Naive thymus-derived CD4-positive, alpha-beta T cell (primary cell): ENCODE measurements at regions of chr17 and their contacts with region 1.

Region 1: GRCh38 chr17:78013683-78014467 is 55.4 kb downstream of the TNRC6C start:
- DNase-seq: peak in 7 of 9 donors; percentile 39 to 68 (median 61)
- ATAC-seq: peak; percentile 77
- H3K4me3 ChIP-seq: no peak overlapping the region
- H3K4me3 Mint-ChIP-seq: no peak overlapping the region
- H3K27ac ChIP-seq: no peak overlapping the region
- H3K27ac Mint-ChIP-seq: peak overlapping the region in 5 of 9 donors; percentile 3 to 64 (median 18)
- H3K4me1 ChIP-seq: peaks cover 0 to 3% of the 10 kb centered on the region in 2 donors
- H3K4me1 Mint-ChIP-seq: peaks cover 18 to 58% (median 43%) of the 10 kb centered on the region in 7 donors
- H3K27me3 ChIP-seq: no peaks in the 10 kb centered on the region
- H3K27me3 Mint-ChIP-seq: no peaks in the 10 kb centered on the region

Region 2: GRCh38 chr17:77542551-77543490 is 471.1 kb before region 1 on chr17:
- CTCF ChIA-PET with region 1: interaction called, 28 read pairs
- POLR2A ChIA-PET with region 1: interaction called, 6 read pairs
- intact Hi-C with region 1: loop called in 1 of 2 experiments (anchors 1 kb)
- DNase-seq: peak; percentile 32 to 72 (median 62)
- ATAC-seq: peak; percentile 87
- H3K4me3 ChIP-seq: no peak overlapping the region
- H3K4me3 Mint-ChIP-seq: no peak overlapping the region
- H3K27ac ChIP-seq: no peak overlapping the region
- H3K27ac Mint-ChIP-seq: no peak overlapping the region
- H3K4me1 ChIP-seq: peaks cover 0 to 5% of the 10 kb centered on the region in 2 donors
- H3K4me1 Mint-ChIP-seq: peaks cover 0 to 7% (median 0%) of the 10 kb centered on the region in 7 donors
- H3K27me3 ChIP-seq: no peaks in the 10 kb centered on the region
- H3K27me3 Mint-ChIP-seq: peaks cover 0 to 37% (median 5%) of the 10 kb centered on the region in 5 donors

Region 3: GRCh38 chr17:77772461-77772897 is 241.4 kb before region 1 on chr17:
- CTCF ChIA-PET with region 1: interaction called, 61 read pairs
- POLR2A ChIA-PET with region 1: no interaction called
- intact Hi-C with region 1: loop called (anchors 1 kb)
- DNase-seq: peak; percentile 41 to 69 (median 57)
- ATAC-seq: peak; percentile 93
- H3K4me3 ChIP-seq: no peak overlapping the region
- H3K4me3 Mint-ChIP-seq: peak overlapping the region in 1 of 10 donors; percentile 8
- H3K27ac ChIP-seq: no peak overlapping the region
- H3K27ac Mint-ChIP-seq: peak overlapping the region in 5 of 9 donors; percentile 12 to 78 (median 74)
- H3K4me1 ChIP-seq: peaks cover 7 to 9% of the 10 kb centered on the region in 2 donors
- H3K4me1 Mint-ChIP-seq: peaks cover 12 to 15% (median 13%) of the 10 kb centered on the region in 7 donors
- H3K27me3 ChIP-seq: no peaks in the 10 kb centered on the region
- H3K27me3 Mint-ChIP-seq: peaks cover 0 to 17% (median 0%) of the 10 kb centered on the region in 5 donors

Region 4: GRCh38 chr17:77914385-77915254 is 99.3 kb before region 1 on chr17:
- CTCF ChIA-PET with region 1: interaction called, 5 read pairs
- POLR2A ChIA-PET with region 1: no interaction called
- intact Hi-C with region 1: loop called in 1 of 2 experiments (anchors 1 kb)
- DNase-seq: no peak
- ATAC-seq: no peak
- H3K4me3 ChIP-seq: no peak overlapping the region
- H3K4me3 Mint-ChIP-seq: peak overlapping the region in 1 of 10 donors; percentile 20
- H3K27ac ChIP-seq: no peak overlapping the region
- H3K27ac Mint-ChIP-seq: peak overlapping the region in 2 of 9 donors; percentile 18 to 51
- H3K4me1 ChIP-seq: peaks cover 0 to 4% of the 10 kb centered on the region in 2 donors
- H3K4me1 Mint-ChIP-seq: peaks cover 10 to 26% (median 14%) of the 10 kb centered on the region in 7 donors
- H3K27me3 ChIP-seq: no peaks in the 10 kb centered on the region
- H3K27me3 Mint-ChIP-seq: peaks cover 25 to 78% (median 45%) of the 10 kb centered on the region in 5 donors

Region 5: GRCh38 chr17:77935121-77935571 is 78.7 kb before region 1 on chr17:
- CTCF ChIA-PET with region 1: no interaction called
- POLR2A ChIA-PET with region 1: no interaction called
- intact Hi-C with region 1: no loop called
- DNase-seq: peak in 5 of 9 donors; percentile 31 to 50 (median 42)
- ATAC-seq: no peak
- H3K4me3 ChIP-seq: no peak overlapping the region
- H3K4me3 Mint-ChIP-seq: peak overlapping the region in 9 of 10 donors; percentile 19 to 64 (median 50)
- H3K27ac ChIP-seq: no peak overlapping the region
- H3K27ac Mint-ChIP-seq: peak overlapping the region in 6 of 9 donors; percentile 2 to 27 (median 12)
- H3K4me1 ChIP-seq: peaks cover 0 to 10% of the 10 kb centered on the region in 2 donors
- H3K4me1 Mint-ChIP-seq: peaks cover 6 to 35% (median 26%) of the 10 kb centered on the region in 7 donors
- H3K27me3 ChIP-seq: no peaks in the 10 kb centered on the region
- H3K27me3 Mint-ChIP-seq: peaks cover 0 to 41% (median 0%) of the 10 kb centered on the region in 5 donors

Region 6: DNA sequence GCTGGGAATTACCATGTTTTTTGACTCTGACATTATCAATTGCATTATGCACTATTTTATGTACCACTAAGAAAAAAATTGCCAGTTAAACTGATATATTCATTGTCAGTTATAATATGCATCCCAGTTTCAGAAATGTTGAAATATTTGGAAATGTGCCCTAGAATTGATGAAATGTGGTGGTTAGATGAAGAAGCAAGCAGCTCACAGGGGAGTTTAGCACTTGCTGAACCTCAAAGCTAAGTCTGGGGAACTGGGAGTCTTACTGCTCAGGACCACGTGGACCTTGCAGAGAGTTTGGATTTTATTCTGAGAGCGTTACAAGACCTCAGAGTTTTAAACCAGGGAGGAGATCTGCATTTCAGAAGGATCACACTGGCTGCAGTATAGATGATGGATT is 12.5 kb after region 1 on chr17:
- CTCF ChIA-PET with region 1: interaction called, 11 read pairs
- POLR2A ChIA-PET with region 1: interaction called, 3 read pairs
- intact Hi-C with region 1: no loop called
- DNase-seq: no peak
- ATAC-seq: no peak
- H3K4me3 ChIP-seq: no peak overlapping the region
- H3K4me3 Mint-ChIP-seq: no peak overlapping the region
- H3K27ac ChIP-seq: no peak overlapping the region
- H3K27ac Mint-ChIP-seq: peak overlapping the region in 4 of 9 donors; percentile 4 to 55 (median 27)
- H3K4me1 ChIP-seq: peaks cover 0 to 6% of the 10 kb centered on the region in 2 donors
- H3K4me1 Mint-ChIP-seq: peaks cover 10 to 49% (median 34%) of the 10 kb centered on the region in 7 donors
- H3K27me3 ChIP-seq: no peaks in the 10 kb centered on the region
- H3K27me3 Mint-ChIP-seq: no peaks in the 10 kb centered on the region

Region 7: DNA sequence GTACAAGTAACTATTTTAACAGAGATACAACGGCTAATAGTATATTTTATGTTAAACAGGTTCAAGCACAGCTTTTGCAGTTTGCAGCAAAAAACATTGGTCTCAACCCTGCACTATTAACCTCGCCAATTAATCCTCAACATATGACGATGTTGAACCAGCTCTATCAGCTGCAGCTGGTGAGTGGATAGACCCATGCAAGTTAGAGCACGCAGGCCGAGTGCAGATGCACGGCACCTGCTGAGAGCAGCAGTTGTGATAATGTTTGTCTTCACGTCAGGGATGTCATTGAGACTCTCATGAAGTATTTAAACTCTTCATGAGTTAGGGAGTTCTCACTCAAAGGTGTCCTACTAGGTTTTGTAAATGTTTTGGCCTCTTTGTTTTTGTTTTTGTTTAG is 69.1 kb after region 1 on chr17:
- CTCF ChIA-PET with region 1: no interaction called
- POLR2A ChIA-PET with region 1: no interaction called
- intact Hi-C with region 1: no loop called
- DNase-seq: no peak
- ATAC-seq: no peak
- H3K4me3 ChIP-seq: no peak overlapping the region
- H3K4me3 Mint-ChIP-seq: no peak overlapping the region
- H3K27ac ChIP-seq: no peak overlapping the region
- H3K27ac Mint-ChIP-seq: no peak overlapping the region
- H3K4me1 ChIP-seq: no peaks in the 10 kb centered on the region
- H3K4me1 Mint-ChIP-seq: peaks cover 0 to 12% (median 0%) of the 10 kb centered on the region in 7 donors
- H3K27me3 ChIP-seq: no peaks in the 10 kb centered on the region
- H3K27me3 Mint-ChIP-seq: no peaks in the 10 kb centered on the region